Mammary epithelial cell (primary cell): ENCODE measurements at regions of chr9 and their contacts with region 1.

Region 1: GRCh38 chr9:34126207-34127034 is at the start of gene DCAF12:
- DNase-seq: peak; percentile 91
- H3K4me3 ChIP-seq: peak within 1 kb of the TSS; percentile 67 to 88 (median 76)
- H3K27ac ChIP-seq: peak within 1 kb of the TSS; percentile 88
- H3K4me1 ChIP-seq: peaks cover 20% of the 10 kb centered on the region
- H3K27me3 ChIP-seq: no peaks in the 10 kb centered on the region
- CTCF ChIP-seq: peak in 1 of 2 donors; percentile 8
- total RNA-seq, gene DCAF12: 30.6 to 31.7 TPM

Region 2: DNA sequence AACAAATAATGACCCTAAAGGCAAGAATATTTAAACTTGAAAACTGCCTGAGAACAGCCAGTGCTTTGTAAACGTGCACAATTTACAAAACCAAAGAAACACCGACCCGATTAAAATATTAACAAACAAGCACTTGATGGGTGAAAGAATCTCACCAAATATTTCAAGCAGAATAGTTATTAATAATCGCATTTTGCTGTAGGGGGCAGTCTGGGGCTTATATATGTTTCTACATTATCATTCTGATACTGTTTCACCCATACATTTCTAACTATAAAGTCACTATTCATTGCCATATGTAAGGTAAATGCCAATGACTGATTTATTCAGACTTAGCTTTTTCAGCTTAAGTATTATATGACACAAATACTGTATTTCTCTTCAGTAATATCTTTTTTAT is 115.4 kb before region 1 on chr9:
- CTCF ChIA-PET with region 1: no interaction called
- dilution Hi-C with region 1: no loop called
- in situ Hi-C with region 1: no loop called
- intact Hi-C with region 1: no loop called
- DNase-seq: peak; percentile 2
- H3K4me3 ChIP-seq: no peak overlapping the region
- H3K27ac ChIP-seq: no peak overlapping the region
- H3K4me1 ChIP-seq: no peaks in the 10 kb centered on the region
- H3K27me3 ChIP-seq: no peaks in the 10 kb centered on the region
- CTCF ChIP-seq: peak; percentile 27 to 36

Region 3: GRCh38 chr9:34072868-34073590 is 53.4 kb before region 1 on chr9:
- CTCF ChIA-PET with region 1: no interaction called
- dilution Hi-C with region 1: no loop called
- in situ Hi-C with region 1: no loop called
- intact Hi-C with region 1: no loop called
- DNase-seq: peak; percentile 79
- H3K4me3 ChIP-seq: no peak overlapping the region
- H3K27ac ChIP-seq: no peak overlapping the region
- H3K4me1 ChIP-seq: peaks cover 18% of the 10 kb centered on the region
- H3K27me3 ChIP-seq: no peaks in the 10 kb centered on the region
- CTCF ChIP-seq: no peak

Region 4: DNA sequence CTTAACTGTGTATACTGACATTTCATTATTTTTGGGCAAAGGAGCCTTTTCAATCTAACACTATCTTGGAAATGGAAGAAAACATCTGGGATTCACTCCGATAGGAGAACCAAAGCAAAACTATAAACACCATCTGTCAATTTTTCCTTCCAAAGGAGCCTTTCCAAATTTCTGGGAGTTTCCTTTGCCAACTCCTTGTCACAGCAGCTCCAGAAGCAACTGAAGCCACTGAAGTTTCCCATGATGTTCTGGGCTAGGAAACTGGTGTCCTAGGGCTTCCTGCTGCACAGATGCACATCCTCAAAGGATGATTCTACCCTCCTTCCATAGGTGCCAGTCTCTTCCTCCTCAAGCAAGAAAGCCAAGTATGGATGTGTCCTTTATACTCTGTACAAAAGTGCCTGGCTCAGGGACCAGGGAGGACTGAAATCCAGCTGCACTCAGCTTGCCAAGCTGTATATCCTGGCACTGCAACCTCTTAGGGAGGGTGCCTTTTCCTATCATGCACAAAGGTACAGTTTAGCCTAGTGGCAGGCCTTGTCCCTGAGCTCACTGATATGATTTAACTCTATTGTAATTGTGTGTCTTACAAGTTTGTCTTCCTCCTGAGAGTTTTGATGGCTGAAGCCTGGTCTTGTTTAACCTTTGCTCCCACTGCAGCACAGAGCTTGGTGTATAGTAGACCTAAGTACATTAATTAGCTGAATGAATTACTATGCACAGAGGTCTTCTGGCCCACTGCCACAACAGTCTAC is 44.0 kb after region 1 on chr9:
- CTCF ChIA-PET with region 1: interaction called, 11 read pairs
- dilution Hi-C with region 1: no loop called
- in situ Hi-C with region 1: no loop called
- intact Hi-C with region 1: no loop called
- DNase-seq: no peak
- H3K4me3 ChIP-seq: no peak overlapping the region
- H3K27ac ChIP-seq: no peak overlapping the region
- H3K4me1 ChIP-seq: no peaks in the 10 kb centered on the region
- H3K27me3 ChIP-seq: no peaks in the 10 kb centered on the region
- CTCF ChIP-seq: no peak

Region 5: GRCh38 chr9:34178520-34179212 is 52.2 kb after region 1 on chr9 and contains the start of gene UBAP1:
- CTCF ChIA-PET with region 1: no interaction called
- dilution Hi-C with region 1: no loop called
- in situ Hi-C with region 1: no loop called
- intact Hi-C with region 1: loop called (anchors 1 kb)
- DNase-seq: peak; percentile 98
- H3K4me3 ChIP-seq: peak within 1 kb of the TSS; percentile 69 to 80 (median 79)
- H3K27ac ChIP-seq: peak within 1 kb of the TSS; percentile 83
- H3K4me1 ChIP-seq: peaks cover 17% of the 10 kb centered on the region
- H3K27me3 ChIP-seq: no peaks in the 10 kb centered on the region
- CTCF ChIP-seq: no peak
- total RNA-seq, gene UBAP1: 68.4 to 71.8 TPM

Region 6: DNA sequence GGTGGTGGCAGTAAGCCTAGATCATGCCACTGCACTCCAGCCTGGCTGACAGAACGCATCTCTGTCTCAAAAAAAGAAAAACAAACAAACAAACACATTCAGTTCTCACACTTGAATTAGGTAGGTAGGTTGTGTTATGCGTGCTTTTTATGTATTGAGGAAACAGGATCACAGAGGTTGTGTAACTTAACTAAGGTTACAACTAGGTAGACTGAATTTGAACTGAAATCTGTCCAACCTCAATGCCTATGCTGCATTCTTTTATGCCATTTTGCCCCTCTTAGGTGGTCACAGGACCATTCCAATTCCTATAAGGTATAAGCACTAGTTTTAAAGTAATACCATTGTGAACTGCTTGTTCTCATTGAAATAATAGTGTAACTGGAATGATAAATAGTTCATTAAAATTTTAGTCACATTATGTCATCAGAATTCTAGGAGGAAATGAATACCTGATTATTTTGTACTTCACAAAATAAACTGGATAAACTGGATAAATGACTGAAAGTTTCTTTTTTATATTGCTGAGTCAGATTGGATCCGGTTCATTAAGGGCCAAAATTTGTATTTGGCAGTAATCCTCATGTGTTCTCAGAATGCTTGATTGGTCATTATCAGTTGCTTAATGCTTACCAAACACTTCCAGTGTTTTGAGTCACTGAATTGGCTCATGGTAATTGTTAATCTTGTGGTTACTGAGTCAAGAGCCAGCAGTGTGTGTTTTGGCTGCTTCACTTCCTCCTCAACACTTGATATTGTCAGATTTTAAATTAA is 59.5 kb after region 1 on chr9:
- CTCF ChIA-PET with region 1: no interaction called
- dilution Hi-C with region 1: no loop called
- in situ Hi-C with region 1: no loop called
- intact Hi-C with region 1: loop called (anchors 2 kb)
- DNase-seq: peak; percentile 97
- H3K4me3 ChIP-seq: no peak overlapping the region
- H3K27ac ChIP-seq: peak overlapping the region; percentile 67
- H3K4me1 ChIP-seq: peaks cover 20% of the 10 kb centered on the region
- H3K27me3 ChIP-seq: no peaks in the 10 kb centered on the region
- CTCF ChIP-seq: no peak

Region 7: DNA sequence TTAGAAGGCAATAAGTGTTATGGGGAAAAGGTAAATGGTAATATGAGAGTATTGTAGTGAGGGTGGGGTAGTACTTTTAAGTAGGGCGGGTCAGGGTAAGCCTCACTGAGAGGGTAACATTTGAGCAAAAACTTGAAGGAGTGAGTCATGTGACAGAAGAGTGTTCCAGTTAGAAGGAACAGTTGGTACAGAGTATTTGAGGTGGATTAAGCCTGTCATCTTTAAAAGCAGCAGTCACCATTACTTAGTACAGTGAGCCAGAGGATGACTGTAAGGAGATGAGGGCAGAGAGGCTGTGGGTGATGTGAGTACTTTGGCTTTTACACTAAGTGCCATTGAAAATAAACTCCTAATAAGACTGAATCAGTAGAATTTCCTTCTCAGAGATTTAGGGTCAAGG is 107.3 kb after region 1 on chr9:
- CTCF ChIA-PET with region 1: no interaction called
- dilution Hi-C with region 1: no loop called
- in situ Hi-C with region 1: no loop called
- intact Hi-C with region 1: loop called (anchors 5 kb)
- DNase-seq: no peak
- H3K4me3 ChIP-seq: no peak overlapping the region
- H3K27ac ChIP-seq: no peak overlapping the region
- H3K4me1 ChIP-seq: peaks cover 7% of the 10 kb centered on the region
- H3K27me3 ChIP-seq: no peaks in the 10 kb centered on the region
- CTCF ChIP-seq: no peak

Region 8: DNA sequence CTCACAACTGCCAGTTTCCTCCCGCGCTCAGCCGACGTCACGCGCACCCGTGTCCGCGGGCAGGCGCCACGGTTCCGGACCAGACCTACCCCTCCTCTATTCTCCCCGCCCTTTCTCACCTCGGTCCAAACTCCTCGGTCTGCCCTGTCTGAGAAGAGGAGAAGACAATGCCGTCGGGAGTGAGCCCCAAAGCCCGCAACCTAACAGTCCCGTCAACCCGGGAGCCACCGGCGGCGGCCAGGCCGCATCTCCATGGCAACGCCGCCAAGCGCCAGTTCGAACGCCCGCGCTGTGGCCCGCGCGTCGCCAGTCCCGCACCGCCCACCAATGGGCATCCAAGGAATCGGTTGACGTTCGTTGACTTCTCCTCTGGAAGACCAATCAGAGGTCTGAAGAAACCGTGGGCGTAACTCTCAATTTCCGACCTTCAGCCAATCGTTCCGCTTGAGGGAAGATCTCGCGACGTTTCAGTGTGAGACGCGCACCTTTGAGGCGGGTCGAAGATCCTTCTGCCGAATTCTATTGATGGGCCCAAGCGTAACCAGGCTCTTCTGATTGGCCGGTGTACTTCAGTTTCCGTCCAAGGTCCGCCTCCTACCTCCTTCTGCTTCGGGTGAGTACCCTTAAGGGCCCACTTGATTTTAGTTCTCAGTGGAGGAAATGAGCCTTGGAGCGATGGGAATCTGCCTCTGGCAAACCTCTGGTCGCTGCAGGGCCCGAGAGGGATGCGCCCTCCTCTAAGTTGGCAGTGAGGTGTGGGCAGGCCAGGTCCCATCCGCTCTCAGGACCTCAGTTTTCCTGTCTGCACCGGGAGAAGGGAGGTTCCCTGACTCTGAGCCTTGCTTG is 202.8 kb after region 1 on chr9 and contains the starts of genes KIF24 and NUDT2:
- CTCF ChIA-PET with region 1: no interaction called
- dilution Hi-C with region 1: no loop called
- in situ Hi-C with region 1: loop called in 1 of 2 experiments (anchors 10 kb)
- intact Hi-C with region 1: loop called (anchors 5 kb)
- DNase-seq: peak; percentile 100
- H3K4me3 ChIP-seq: peak within 1 kb of the TSS; percentile 85 to 89 (median 86)
- H3K27ac ChIP-seq: peak within 1 kb of the TSS; percentile 96
- H3K4me1 ChIP-seq: peaks cover 45% of the 10 kb centered on the region
- H3K27me3 ChIP-seq: no peaks in the 10 kb centered on the region
- CTCF ChIP-seq: no peak
- total RNA-seq, gene KIF24: 1.3 to 3.9 TPM
- total RNA-seq, gene NUDT2: 17.8 to 22.9 TPM

Region 9: DNA sequence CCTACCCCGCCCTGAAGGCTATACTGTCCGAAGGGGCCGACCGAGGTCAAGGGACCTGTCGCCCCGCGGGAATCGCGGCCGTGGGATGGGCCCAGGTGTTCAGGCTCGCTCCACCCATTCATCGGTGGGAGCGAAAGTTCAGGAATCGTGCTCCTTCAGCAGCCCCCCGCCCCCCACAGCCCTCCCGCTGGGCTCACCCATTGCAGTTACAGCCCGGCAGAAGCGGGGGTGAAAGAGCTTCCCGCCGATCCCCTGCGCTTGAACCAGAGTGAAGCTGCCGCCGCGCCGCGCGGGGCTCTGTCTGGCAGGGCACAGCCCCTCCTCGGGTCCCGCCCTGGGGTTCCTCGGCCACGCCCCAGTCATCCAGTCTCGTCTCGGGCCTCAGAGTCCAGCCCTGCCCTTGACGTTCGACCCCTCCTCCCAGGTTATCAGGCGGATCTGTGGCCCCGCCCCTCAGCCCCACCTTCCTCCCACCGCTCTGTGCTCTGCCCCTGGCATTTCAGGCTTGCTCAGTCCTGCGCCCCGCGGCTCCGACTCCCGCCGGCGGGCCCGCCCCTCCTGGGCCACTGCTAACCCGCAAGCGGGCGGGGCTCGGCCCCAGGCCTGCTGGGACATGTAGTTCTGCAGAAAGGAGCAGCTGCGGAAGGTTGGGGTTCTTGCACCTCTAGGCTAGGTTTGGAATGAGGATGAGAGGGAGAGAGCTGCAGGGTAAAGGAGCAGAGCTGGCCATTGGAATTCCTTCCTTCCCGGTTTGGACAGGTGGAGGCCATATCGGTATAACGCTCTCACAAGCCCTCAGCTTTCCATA is 250.4 kb after region 1 on chr9 and contains the start of gene MYORG:
- CTCF ChIA-PET with region 1: no interaction called
- dilution Hi-C with region 1: no loop called
- in situ Hi-C with region 1: no loop called
- intact Hi-C with region 1: loop called (anchors 1 kb)
- DNase-seq: peak; percentile 98
- H3K4me3 ChIP-seq: peak within 1 kb of the TSS; percentile 73 to 85 (median 84)
- H3K27ac ChIP-seq: peak within 1 kb of the TSS; percentile 42
- H3K4me1 ChIP-seq: peaks cover 39% of the 10 kb centered on the region
- H3K27me3 ChIP-seq: no peaks in the 10 kb centered on the region
- CTCF ChIP-seq: no peak
- total RNA-seq, gene MYORG: 23.8 to 35.0 TPM